ENCODE measurements at regions of chr15 and their contacts with region 1.

Region 1: DNA sequence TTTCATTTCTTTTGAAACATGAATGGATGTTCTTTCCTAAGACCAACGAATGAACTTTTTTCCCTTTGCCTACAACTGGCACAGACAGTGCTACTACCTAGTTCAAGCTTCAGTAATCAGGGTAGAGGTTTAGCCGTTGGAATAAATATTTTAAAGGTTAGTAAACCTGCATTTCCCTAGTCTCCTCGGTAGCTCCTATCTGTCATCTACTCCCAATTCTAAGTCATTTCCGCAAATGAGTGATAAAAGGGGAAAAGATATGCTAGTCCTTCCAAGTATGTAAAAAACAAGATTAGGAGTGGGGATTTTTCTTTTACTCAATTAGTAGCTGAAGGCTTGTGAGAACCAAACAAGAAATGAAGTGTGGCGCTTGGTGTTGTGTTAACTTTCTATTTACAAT is 15.2 kb downstream of the SLTM start:
- DNase-seq: no peak
- H3K4me3 ChIP-seq: no peak overlapping the region
- H3K27ac ChIP-seq: no peak overlapping the region
- H3K4me1 ChIP-seq: no peaks in the 10 kb centered on the region
- CTCF ChIP-seq: no peak

Region 2: GRCh38 chr15:57510647-57511046 is 1407.6 kb before region 1 on chr15:
- CTCF ChIA-PET with region 1: no interaction called
- POLR2A ChIA-PET with region 1: no interaction called
- intact Hi-C with region 1: no loop called
- DNase-seq: no peak
- H3K4me3 ChIP-seq: no peak overlapping the region
- H3K27ac ChIP-seq: no peak overlapping the region
- H3K4me1 ChIP-seq: no peaks in the 10 kb centered on the region
- CTCF ChIP-seq: no peak

Region 3: GRCh38 chr15:58906225-58906624 is 12.0 kb before region 1 on chr15:
- CTCF ChIA-PET with region 1: no interaction called
- POLR2A ChIA-PET with region 1: interaction called, 11 read pairs
- intact Hi-C with region 1: no loop called
- DNase-seq: no peak
- H3K4me3 ChIP-seq: no peak overlapping the region
- H3K27ac ChIP-seq: no peak overlapping the region
- H3K4me1 ChIP-seq: no peaks in the 10 kb centered on the region
- CTCF ChIP-seq: no peak

Region 4: DNA sequence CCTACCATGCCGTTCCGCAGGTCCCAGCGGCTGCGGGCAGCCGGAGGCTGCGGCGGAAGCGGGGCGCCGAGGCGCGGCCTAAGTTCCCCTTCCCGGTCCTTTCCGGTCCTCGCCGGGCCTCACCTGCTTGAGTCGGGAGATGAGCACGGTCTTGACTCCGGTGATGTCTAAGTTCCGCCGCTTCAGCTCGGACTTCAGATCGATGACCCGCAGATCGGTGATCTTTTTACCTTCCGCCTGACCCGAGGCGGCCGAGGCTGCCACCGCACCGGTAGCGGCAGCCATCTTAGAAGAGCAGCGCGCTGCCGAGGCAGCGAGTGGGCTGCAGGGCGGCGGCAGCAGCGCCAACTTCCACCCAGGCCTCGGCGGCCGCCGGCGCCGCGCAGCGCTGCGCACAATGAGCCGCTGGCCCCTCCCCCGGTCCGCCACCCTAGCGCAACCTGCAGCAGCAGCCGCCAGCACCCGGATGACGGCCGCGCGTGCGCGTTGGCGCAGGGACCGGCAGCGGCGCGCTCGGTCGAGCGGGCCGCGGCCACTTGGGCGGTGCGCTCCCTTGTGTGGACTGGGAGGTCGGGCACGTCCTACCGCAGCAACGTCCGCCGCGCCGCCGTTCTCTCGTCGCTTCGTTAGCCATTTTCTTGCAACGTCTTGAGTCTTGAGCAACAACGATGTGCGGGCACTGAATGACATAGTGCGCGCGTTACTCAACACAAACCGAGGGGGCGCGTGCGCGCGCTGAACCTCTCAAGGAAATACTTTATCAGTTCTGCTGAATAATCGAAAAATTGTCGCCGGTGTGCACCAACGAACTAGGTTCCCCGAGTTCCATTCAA is 15.3 kb after region 1 on chr15 and contains the start of gene SLTM:
- CTCF ChIA-PET with region 1: no interaction called
- POLR2A ChIA-PET with region 1: interaction called, 12 read pairs
- intact Hi-C with region 1: no loop called
- DNase-seq: peak; percentile 95
- H3K4me3 ChIP-seq: peak within 1 kb of the TSS; percentile 77
- H3K27ac ChIP-seq: peak within 1 kb of the TSS; percentile 92
- H3K4me1 ChIP-seq: peaks cover 20% of the 10 kb centered on the region
- CTCF ChIP-seq: peak; percentile 58
- total RNA-seq, gene SLTM: 103 and 158 TPM in 2 replicates

Region 5: DNA sequence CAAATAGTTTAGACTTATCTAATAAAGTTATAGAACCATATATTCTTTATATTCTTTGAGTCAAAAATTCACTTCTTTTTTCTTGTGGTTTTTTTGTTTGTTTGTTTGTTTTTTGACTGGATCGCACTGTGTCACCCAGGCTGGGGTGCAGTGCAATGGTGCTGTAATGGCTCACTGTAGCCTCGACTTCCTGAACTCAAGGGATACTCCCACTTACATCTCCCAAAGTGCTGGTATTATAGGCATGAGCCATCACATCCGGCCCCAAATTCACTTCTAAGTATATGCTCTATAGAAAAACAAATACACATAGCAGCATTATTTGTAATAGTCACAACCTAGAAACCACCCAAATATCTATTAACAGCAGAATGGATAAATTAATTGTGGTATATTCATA is 28.9 kb after region 1 on chr15:
- CTCF ChIA-PET with region 1: no interaction called
- POLR2A ChIA-PET with region 1: no interaction called
- intact Hi-C with region 1: no loop called
- DNase-seq: no peak
- H3K4me3 ChIP-seq: no peak overlapping the region
- H3K27ac ChIP-seq: no peak overlapping the region
- H3K4me1 ChIP-seq: no peaks in the 10 kb centered on the region
- CTCF ChIP-seq: no peak

Measured in OCI-LY7 (cell line).